Right ventricle myocardium inferior (tissue), 1 donor: ENCODE measurements at regions of chr17 and their contacts with region 1.

Region 1: GRCh38 chr17:66906321-66907278 is 57.9 kb upstream of the CACNG4 start:
- DNase-seq: peak; percentile 85
- ATAC-seq: no peak

Region 2: GRCh38 chr17:66493991-66494803 is 412.4 kb before region 1 on chr17:
- intact Hi-C with region 1: no loop called
- DNase-seq: no peak
- ATAC-seq: no peak

Region 3: GRCh38 chr17:66715745-66716156 is 190.8 kb before region 1 on chr17:
- intact Hi-C with region 1: loop called (anchors 2 kb)
- DNase-seq: no peak
- ATAC-seq: peak; percentile 50

Region 4: GRCh38 chr17:66737524-66737923 is 169.1 kb before region 1 on chr17:
- intact Hi-C with region 1: loop called (anchors 5 kb)
- DNase-seq: no peak
- ATAC-seq: peak; percentile 98

Region 5: GRCh38 chr17:67262435-67263117 is 356.0 kb after region 1 on chr17:
- intact Hi-C with region 1: no loop called
- DNase-seq: no peak
- ATAC-seq: no peak